ENCODE measurements at regions of chr5 and their contacts with region 1.

Region 1: DNA sequence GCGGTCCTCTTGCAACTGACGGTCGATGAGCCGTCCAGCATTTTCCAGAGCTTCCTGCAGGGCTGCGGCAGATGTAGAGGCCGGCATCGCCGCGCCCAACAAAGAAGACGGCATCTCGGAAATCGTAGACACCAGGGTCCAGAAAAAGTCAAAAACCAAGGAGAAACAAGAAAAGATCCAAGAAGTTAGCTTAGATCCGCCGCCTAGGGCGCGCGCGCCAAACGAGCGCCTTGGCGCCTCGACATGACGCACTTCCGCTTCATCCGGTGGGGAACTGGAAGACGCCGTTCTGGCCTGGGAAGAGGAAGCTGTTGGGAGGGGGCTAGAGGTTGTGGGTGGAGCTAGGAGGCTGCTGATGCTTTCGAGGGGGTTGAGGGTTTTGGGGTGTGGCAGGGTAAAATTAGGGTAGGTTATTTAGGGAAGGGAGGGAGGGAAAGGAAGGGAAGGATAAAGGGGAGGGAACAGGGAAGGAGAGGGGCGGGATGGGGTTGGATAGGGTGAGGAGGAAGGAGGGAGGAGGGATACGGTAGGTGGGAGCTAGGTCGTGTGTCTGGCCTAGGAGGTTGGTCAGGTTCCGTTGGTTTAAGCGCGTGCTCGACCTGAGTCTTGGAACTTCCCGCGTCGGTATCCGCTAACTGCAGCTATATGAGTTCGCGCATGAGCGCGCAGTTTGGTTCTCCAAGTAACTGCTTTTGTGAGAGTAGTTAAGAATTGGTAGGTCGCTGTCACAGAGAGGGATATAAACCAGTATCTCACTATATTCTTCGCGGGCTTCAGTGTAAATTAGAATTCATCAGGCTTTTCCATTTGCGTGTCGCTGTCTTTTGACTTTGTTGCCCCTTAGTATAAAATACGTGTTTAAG is at the start of gene NUP155:
- DNase-seq: peak; percentile 67 to 95
- H3K4me3 ChIP-seq: peak within 1 kb of the TSS; percentile 78 to 84
- H3K27ac ChIP-seq: peak within 1 kb of the TSS; percentile 64 to 89
- H3K4me1 ChIP-seq: peaks cover 0 to 12% of the 10 kb centered on the region in 2 donors
- H3K27me3 ChIP-seq: no peaks in the 10 kb centered on the region
- CTCF ChIP-seq: no peak
- total RNA-seq, gene NUP155: 62.3 TPM

Region 2: DNA sequence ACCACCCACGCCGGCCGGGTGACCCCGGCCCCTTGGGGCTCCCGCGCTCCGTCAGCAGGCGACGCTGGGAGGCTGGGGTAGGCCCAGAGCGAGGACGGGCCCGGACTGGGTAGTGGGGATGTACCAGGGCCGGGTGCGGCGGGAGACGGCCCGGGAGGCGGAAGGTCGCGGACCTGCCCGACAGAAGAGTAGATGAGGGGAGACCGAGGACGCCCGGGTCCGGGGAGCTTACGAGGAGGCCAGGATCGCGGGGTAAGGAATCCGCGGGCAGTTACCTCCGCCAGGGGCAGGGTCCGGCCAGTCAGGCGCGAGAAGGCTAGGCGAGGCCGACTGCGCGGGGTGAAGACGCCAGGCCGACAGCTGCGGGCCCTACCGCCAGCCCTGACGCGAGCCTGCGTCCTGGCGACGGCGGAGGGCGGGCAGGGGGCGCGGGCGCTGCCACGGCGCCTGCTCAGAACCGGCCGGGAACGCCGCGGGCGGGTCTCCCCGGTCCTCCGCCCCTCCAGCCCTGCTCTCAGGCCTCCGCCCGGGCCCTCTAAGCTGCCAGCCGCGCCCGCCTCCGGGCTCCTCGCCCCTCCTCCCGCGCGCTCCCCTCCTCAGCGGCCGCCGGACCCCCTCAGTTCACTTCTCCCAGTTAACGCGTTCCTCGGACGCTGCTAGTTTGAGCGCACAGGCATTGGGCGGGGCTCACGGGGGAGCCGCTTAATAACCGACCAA is 122.0 kb before region 1 on chr5 and contains the start of gene CPLANE1:
- intact Hi-C with region 1: loop called (anchors 5 kb)
- DNase-seq: peak in 1 of 2 donors; percentile 84
- H3K4me3 ChIP-seq: peak within 1 kb of the TSS; percentile 90 to 99
- H3K27ac ChIP-seq: peak within 1 kb of the TSS; percentile 95 to 99
- H3K4me1 ChIP-seq: peaks cover 6 to 15% of the 10 kb centered on the region in 2 donors
- H3K27me3 ChIP-seq: no peaks in the 10 kb centered on the region
- CTCF ChIP-seq: peak in 2 of 3 experiments; percentile 15 to 20
- total RNA-seq, gene CPLANE1: 13.1 TPM

Region 3: GRCh38 chr5:37319037-37319782 is 51.9 kb before region 1 on chr5:
- intact Hi-C with region 1: no loop called
- DNase-seq: no peak
- H3K4me3 ChIP-seq: no peak overlapping the region
- H3K27ac ChIP-seq: no peak overlapping the region
- H3K4me1 ChIP-seq: no peaks in the 10 kb centered on the region
- H3K27me3 ChIP-seq: no peaks in the 10 kb centered on the region
- CTCF ChIP-seq: no peak

Measured in ascending aorta (tissue), 2 donors.